Heart right ventricle (tissue), 16 donors: ENCODE measurements at regions of chr3 and their contacts with region 1.

Region 1: GRCh38 chr3:143314251-143315093 is 194.9 kb downstream of the CHST2 start:
- DNase-seq: no peak
- ATAC-seq: peak in 3 of 8 donors; percentile 31 to 58 (median 32)
- H3K4me3 ChIP-seq: no peak overlapping the region
- H3K27ac ChIP-seq: no peak overlapping the region
- H3K4me1 ChIP-seq: peaks cover 0 to 24% (median 16%) of the 10 kb centered on the region in 9 donors
- H3K27me3 ChIP-seq: no peaks in the 10 kb centered on the region
- CTCF ChIP-seq: no peak

Region 2: GRCh38 chr3:143261848-143262247 is 52.6 kb before region 1 on chr3:
- intact Hi-C with region 1: no loop called
- DNase-seq: no peak
- ATAC-seq: no peak
- H3K4me3 ChIP-seq: no peak overlapping the region
- H3K27ac ChIP-seq: no peak overlapping the region
- H3K4me1 ChIP-seq: no peaks in the 10 kb centered on the region
- H3K27me3 ChIP-seq: no peaks in the 10 kb centered on the region
- CTCF ChIP-seq: no peak

Region 3: DNA sequence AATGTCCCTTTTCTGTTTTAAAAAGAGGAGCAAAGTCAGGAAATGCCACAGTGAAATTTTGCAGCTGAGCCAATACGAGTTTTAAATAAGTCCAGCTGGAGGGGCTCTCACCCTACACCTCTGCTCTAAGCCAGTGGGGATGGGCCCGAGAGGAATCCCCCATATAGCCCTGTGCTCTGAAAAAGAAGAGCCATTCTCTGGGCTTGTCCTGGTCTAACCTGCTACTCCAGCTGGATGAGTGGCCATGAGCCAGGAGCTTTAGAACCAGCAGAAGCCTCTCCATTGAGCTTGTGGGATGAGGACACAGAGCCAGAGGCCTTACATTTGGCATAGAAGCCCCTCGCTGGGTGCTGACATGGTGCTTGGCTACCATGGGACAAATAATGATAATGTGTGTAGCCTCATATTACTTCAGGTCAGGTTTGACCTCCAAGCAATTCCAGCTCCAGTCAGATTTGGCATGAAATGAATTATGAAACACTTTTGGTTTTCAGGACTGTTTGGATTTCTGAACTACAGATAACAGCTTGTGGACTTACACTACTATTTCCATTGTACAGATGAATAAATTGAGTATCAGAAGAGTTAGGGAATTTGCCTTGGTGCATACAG is 22.5 kb before region 1 on chr3:
- intact Hi-C with region 1: loop called in 1 of 10 experiments (anchors 1 kb)
- DNase-seq: peak in 1 of 2 donors; percentile 25
- ATAC-seq: peak in 6 of 8 donors; percentile 27 to 75 (median 54)
- H3K4me3 ChIP-seq: no peak overlapping the region
- H3K27ac ChIP-seq: no peak overlapping the region
- H3K4me1 ChIP-seq: peaks cover 0 to 17% (median 11%) of the 10 kb centered on the region in 9 donors
- H3K27me3 ChIP-seq: no peaks in the 10 kb centered on the region
- CTCF ChIP-seq: no peak